ENCODE measurements at regions of chr11 and their contacts with region 1.

Region 1: DNA sequence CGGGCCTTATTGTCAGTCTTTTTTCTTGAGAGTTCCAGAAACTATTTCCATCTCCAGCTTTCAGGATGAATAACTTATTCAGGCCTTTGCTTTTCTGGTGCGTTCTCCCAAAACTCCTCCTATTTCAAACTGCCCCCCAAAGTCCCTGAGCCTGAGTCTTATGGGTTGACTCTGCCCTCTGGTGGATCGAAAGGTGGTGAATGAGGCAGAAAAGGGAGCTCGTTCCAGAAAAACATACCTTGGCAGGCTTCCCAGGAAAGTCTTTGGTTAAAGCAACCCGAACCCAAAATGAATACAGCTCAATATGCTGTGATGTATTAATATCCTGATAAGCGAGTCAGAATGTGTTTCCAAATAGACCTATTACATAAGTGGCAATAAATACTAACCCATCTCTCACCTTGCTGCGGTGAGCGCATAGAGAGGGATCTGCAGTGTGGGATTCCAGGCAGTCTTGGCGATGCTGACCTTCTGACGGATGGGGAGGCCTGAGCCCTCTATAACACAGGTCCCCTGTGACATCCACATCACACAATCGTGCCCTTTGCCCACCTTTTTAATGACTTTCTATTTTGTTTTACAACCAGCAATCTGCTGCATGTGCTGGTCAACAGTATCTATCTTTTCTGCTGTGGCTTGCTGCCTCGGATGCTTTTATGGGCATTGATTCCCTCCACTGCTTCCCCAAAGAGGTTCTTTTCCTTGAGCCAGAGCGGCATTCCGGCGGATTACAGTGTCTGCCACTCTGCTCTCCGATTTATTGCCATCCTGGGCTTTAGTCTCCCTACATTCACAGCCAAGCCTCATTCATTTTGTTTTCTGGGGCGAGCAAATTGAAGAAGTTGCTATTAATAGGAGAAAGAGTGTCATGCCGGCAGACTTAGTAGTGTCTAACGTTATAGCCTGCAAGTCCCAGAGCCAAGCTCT is 756.8 kb downstream of the NTM start:
- DNase-seq: peak; percentile 46
- ATAC-seq: peak; percentile 46
- H3K4me3 Mint-ChIP-seq: no peak overlapping the region
- H3K27ac Mint-ChIP-seq: no peak overlapping the region
- H3K4me1 Mint-ChIP-seq: peaks cover 23% of the 10 kb centered on the region
- H3K27me3 Mint-ChIP-seq: no peaks in the 10 kb centered on the region
- CTCF ChIP-seq: peak; percentile 47

Region 2: DNA sequence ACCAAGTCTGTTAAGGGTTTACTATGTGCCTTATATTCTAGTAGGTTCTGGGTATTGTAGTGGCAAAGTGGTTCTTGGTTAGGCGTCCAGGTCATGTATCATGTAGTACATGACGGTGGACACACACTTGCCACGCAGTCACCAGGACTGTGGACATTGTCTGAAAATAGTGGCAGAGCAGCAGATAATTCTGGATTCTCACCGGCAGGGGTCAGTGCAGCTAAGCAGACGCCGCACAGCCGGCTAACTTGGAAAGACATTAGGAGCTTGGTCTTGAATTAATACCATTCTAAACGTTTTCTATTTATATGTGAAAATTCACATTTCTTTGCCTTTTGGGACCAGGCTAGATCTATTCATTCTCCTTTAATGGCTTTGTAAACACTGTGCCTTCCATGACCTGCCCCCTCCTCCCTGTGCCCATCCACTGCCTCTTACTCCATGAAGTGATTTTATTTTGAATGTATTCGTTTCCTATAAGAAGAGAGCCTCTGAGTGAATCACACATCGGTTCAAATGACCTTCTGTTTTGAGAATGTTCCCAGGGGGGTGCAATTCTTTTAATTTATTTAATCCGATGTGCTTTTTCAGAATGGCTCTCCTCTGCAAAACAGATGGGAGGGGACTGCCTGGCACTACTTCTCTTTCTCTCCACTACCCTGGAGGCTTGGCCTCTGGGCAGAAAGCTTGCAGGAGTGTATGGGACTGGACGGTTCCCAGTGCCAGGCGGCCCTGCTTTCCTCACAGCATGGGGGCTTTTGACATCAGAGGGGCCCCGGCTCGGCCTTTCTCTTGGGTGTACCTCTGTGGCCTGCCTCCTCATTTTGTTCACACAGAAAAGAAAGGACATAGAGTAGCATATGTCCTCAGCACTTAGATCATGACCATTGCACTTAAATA is 378.8 kb before region 1 on chr11:
- CTCF ChIA-PET with region 1: interaction called, 24 read pairs
- POLR2A ChIA-PET with region 1: no interaction called
- DNase-seq: peak; percentile 74
- ATAC-seq: peak; percentile 89
- H3K4me3 Mint-ChIP-seq: no peak overlapping the region
- H3K27ac Mint-ChIP-seq: no peak overlapping the region
- H3K4me1 Mint-ChIP-seq: peaks cover 7% of the 10 kb centered on the region
- H3K27me3 Mint-ChIP-seq: no peaks in the 10 kb centered on the region
- CTCF ChIP-seq: peak; percentile 77

Region 3: GRCh38 chr11:131889146-131889577 is 238.1 kb before region 1 on chr11:
- CTCF ChIA-PET with region 1: interaction called, 22 read pairs
- POLR2A ChIA-PET with region 1: no interaction called
- DNase-seq: no peak
- ATAC-seq: peak; percentile 59
- H3K4me3 Mint-ChIP-seq: no peak overlapping the region
- H3K27ac Mint-ChIP-seq: no peak overlapping the region
- H3K4me1 Mint-ChIP-seq: 0 out of 2 replicates have a peak, but pooled peaks cover 8% of the 10 kb centered on the region
- H3K27me3 Mint-ChIP-seq: no peaks in the 10 kb centered on the region; the same call in 1 of the 2 replicates
- CTCF ChIP-seq: no peak

Region 4: DNA sequence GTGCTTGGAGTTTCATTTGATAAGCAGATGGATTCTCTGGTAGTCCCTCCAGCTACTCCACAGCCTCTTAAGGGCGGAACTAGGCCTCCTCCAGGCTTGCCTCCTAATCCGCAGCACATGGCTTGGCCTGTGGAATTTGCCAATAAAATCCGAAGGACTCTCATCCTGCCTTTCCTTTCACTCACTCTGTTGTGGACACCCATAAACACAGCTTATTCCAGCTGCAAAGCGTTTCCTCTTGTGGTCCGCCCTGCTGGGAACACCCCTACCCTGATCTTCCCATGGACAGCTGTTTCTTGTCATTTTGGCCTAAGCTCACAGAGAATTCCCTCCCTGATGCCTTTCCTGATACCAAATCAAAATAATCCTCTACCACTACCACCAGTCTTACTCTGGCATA is 210.6 kb before region 1 on chr11:
- CTCF ChIA-PET with region 1: interaction called, 25 read pairs
- POLR2A ChIA-PET with region 1: no interaction called
- DNase-seq: no peak
- ATAC-seq: no peak
- H3K4me3 Mint-ChIP-seq: no peak overlapping the region
- H3K27ac Mint-ChIP-seq: no peak overlapping the region
- H3K4me1 Mint-ChIP-seq: peaks cover 34% of the 10 kb centered on the region
- H3K27me3 Mint-ChIP-seq: peaks cover 13% of the 10 kb centered on the region
- CTCF ChIP-seq: no peak

Region 5: GRCh38 chr11:131964698-131965483 is 162.3 kb before region 1 on chr11:
- CTCF ChIA-PET with region 1: no interaction called
- POLR2A ChIA-PET with region 1: no interaction called
- DNase-seq: no peak
- ATAC-seq: no peak
- H3K4me3 Mint-ChIP-seq: no peak overlapping the region
- H3K27ac Mint-ChIP-seq: no peak overlapping the region
- H3K4me1 Mint-ChIP-seq: peaks cover 10% of the 10 kb centered on the region
- H3K27me3 Mint-ChIP-seq: no peaks in the 10 kb centered on the region
- CTCF ChIP-seq: no peak

Region 6: DNA sequence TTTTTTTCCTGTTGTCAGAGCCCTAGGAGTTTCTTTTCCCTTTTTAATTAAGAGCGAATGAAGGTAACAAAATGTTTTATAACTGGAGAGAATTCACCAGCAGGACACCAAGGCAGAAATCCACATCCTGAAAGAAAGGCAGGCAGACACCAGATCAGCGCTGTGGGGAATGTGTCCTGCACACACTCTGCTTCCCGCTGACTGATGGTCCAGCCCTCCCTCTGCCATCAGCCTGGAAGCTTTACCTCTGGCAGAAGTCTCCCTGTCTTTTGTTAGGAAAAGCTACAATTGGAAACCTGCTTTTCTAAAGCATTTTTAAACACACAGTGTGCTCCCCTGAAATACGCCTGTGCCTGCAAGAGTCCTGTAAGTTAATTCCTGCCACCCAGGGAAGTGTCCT is 118.4 kb before region 1 on chr11:
- CTCF ChIA-PET with region 1: interaction called, 11 read pairs
- POLR2A ChIA-PET with region 1: no interaction called
- DNase-seq: peak; percentile 21
- ATAC-seq: peak; percentile 94
- H3K4me3 Mint-ChIP-seq: no peak overlapping the region
- H3K27ac Mint-ChIP-seq: no peak overlapping the region; the same call in 1 of the 2 replicates
- H3K4me1 Mint-ChIP-seq: peaks cover 50% of the 10 kb centered on the region
- H3K27me3 Mint-ChIP-seq: no peaks in the 10 kb centered on the region; the same call in 1 of the 2 replicates
- CTCF ChIP-seq: no peak

Region 7: DNA sequence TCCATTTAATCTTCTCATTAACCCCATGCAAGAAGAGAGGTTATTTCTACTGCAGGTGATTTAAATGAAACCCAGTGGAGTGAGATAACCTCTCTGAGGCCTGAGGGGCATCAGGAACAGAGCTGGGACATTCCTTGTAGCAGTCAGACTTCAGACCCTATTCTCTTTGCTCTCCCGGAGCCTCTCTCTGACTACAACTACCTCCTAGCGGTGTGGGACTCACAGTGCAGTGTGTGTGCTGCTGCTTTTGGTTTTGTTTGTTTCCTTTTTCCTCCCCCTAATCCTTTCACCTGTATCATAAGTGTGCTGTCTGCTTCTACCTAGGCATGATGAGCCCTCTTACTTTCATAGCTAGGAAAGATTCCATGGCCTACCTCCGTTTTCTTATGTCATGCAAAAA is 12.8 kb after region 1 on chr11:
- CTCF ChIA-PET with region 1: interaction called, 15 read pairs
- POLR2A ChIA-PET with region 1: no interaction called
- DNase-seq: no peak
- ATAC-seq: peak; percentile 91
- H3K4me3 Mint-ChIP-seq: no peak overlapping the region
- H3K27ac Mint-ChIP-seq: no peak overlapping the region
- H3K4me1 Mint-ChIP-seq: no peaks in the 10 kb centered on the region
- H3K27me3 Mint-ChIP-seq: no peaks in the 10 kb centered on the region
- CTCF ChIP-seq: no peak

Measured in WTC11 (cell line).